Heart right ventricle (tissue), 16 donors: ENCODE measurements at regions of chr12 and their contacts with region 1.

Region 1: GRCh38 chr12:92784795-92785562 is 82.2 kb downstream of the PLEKHG7 start:
- DNase-seq: peak in 1 of 2 donors; percentile 23
- ATAC-seq: peak; percentile 76 to 94 (median 90)
- H3K4me3 ChIP-seq: no peak overlapping the region
- H3K27ac ChIP-seq: peak overlapping the region in 3 of 10 donors; percentile 0 to 11 (median 3)
- H3K4me1 ChIP-seq: peaks cover 0 to 30% (median 11%) of the 10 kb centered on the region in 9 donors
- H3K27me3 ChIP-seq: no peaks in the 10 kb centered on the region
- CTCF ChIP-seq: peak; percentile 26 to 73 (median 61)

Region 2: DNA sequence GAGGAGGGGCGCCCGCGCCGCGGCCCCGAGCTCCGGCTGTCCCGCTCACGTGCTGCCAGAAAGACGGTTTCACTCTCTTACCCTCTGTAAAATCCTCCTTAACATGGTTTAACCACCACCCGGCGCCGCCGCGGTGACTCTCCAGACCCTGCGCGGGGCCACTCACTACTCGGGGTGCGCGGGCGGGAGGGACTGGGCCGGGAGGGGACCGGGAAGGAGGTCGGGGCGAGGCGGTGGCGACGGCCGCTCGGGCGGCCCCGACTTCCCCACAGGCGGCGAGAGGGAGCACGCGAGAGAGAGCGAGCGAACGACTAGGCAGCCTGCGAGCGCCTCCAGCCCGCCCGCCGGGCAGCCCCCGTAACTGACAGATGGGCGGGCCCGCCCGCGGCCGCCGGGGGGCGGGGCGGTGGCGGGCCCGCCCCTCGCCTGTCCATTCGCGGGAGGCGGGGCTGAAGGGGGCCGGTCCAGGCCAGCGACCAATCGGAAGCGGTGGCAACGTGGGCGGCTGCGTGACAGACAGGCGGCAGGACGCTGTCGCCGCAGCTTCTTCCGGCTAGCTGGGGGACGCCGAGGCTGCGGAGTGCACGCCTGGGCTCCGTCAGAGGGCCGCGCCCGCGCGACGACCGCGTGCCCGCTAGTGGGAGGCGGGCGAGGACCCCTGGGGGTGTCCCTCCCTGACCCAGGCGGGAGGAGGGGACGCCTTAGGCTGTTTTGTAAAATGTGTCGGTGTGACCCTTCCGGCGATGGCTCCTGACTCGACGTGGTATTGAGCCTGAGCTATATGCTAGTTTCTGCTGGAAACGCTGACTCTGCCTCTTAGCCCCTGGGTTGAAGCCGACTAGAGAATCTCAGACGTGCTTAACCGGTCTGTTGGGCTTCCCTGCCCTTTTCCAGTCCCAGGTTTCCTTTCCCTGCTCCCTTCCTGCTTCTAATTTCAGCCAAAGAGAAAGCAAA is 144.3 kb after region 1 on chr12 and contains the start of gene EEA1:
- intact Hi-C with region 1: loop called in 4 of 10 experiments (anchors 5 to 10 kb)
- DNase-seq: peak; percentile 97 to 98
- ATAC-seq: peak; percentile 95 to 98 (median 95)
- H3K4me3 ChIP-seq: peak within 1 kb of the TSS; percentile 66 to 94 (median 87)
- H3K27ac ChIP-seq: peak within 1 kb of the TSS; percentile 92 to 99 (median 97)
- H3K4me1 ChIP-seq: peaks cover 0 to 51% (median 43%) of the 10 kb centered on the region in 9 donors
- H3K27me3 ChIP-seq: no peaks in the 10 kb centered on the region
- CTCF ChIP-seq: peak in 5 of 9 donors; percentile 7 to 56 (median 41)
- total RNA-seq, gene EEA1: 21.7 to 41.6 (median 33.8) TPM

Region 3: GRCh38 chr12:92943482-92944250 is 158.7 kb after region 1 on chr12:
- intact Hi-C with region 1: loop called in 1 of 10 experiments (anchors 10 kb)
- DNase-seq: no peak
- ATAC-seq: no peak
- H3K4me3 ChIP-seq: no peak overlapping the region
- H3K27ac ChIP-seq: no peak overlapping the region
- H3K4me1 ChIP-seq: peaks cover 0 to 4% (median 0%) of the 10 kb centered on the region in 9 donors
- H3K27me3 ChIP-seq: no peaks in the 10 kb centered on the region
- CTCF ChIP-seq: peak in 2 of 9 donors; percentile 25 to 36

Region 4: GRCh38 chr12:93387780-93388179 is 602.8 kb after region 1 on chr12:
- intact Hi-C with region 1: loop called in 1 of 10 experiments (anchors 10 kb)
- DNase-seq: no peak
- ATAC-seq: peak in 4 of 8 donors; percentile 30 to 58 (median 48)
- H3K4me3 ChIP-seq: no peak overlapping the region
- H3K27ac ChIP-seq: peak overlapping the region in 5 of 10 donors; percentile 6 to 50 (median 23)
- H3K4me1 ChIP-seq: peaks cover 3 to 92% (median 66%) of the 10 kb centered on the region in 9 donors
- H3K27me3 ChIP-seq: no peaks in the 10 kb centered on the region
- CTCF ChIP-seq: no peak

Region 5: GRCh38 chr12:93419388-93420034 is 634.5 kb after region 1 on chr12:
- intact Hi-C with region 1: loop called in 5 of 10 experiments (anchors 5 to 10 kb)
- DNase-seq: no peak
- ATAC-seq: peak in 7 of 8 donors; percentile 51 to 75 (median 56)
- H3K4me3 ChIP-seq: peak overlapping the region in 1 of 10 donors; percentile 4
- H3K27ac ChIP-seq: peak overlapping the region in 2 of 10 donors; percentile 1 to 2
- H3K4me1 ChIP-seq: peaks cover 2 to 82% (median 67%) of the 10 kb centered on the region in 9 donors
- H3K27me3 ChIP-seq: no peaks in the 10 kb centered on the region
- CTCF ChIP-seq: peak; percentile 48 to 81 (median 72)